Naive thymus-derived CD4-positive, alpha-beta T cell (primary cell): ENCODE measurements at regions of chr10 and their contacts with region 1.

Region 1: GRCh38 chr10:124741281-124741921 is 2.8 kb downstream of the FAM53B start:
- DNase-seq: peak in 8 of 9 donors; percentile 62 to 80 (median 76)
- ATAC-seq: peak; percentile 68
- H3K4me3 ChIP-seq: peak overlapping the region; percentile 61
- H3K4me3 Mint-ChIP-seq: peak overlapping the region; percentile 83 to 98 (median 96)
- H3K27ac ChIP-seq: peak overlapping the region; percentile 57
- H3K27ac Mint-ChIP-seq: peak overlapping the region; percentile 81 to 92 (median 87)
- H3K4me1 ChIP-seq: peaks cover 63 to 68% of the 10 kb centered on the region in 2 donors
- H3K4me1 Mint-ChIP-seq: peaks cover 40 to 78% (median 73%) of the 10 kb centered on the region in 7 donors
- H3K27me3 ChIP-seq: no peaks in the 10 kb centered on the region
- H3K27me3 Mint-ChIP-seq: peaks cover 0 to 27% (median 0%) of the 10 kb centered on the region in 5 donors

Region 2: GRCh38 chr10:124231168-124232155 is 509.9 kb before region 1 on chr10:
- CTCF ChIA-PET with region 1: no interaction called
- POLR2A ChIA-PET with region 1: no interaction called
- intact Hi-C with region 1: loop called in 1 of 2 experiments (anchors 5 kb)
- DNase-seq: peak; percentile 14 to 88 (median 70)
- ATAC-seq: peak; percentile 67
- H3K4me3 ChIP-seq: no peak overlapping the region
- H3K4me3 Mint-ChIP-seq: peak overlapping the region in 6 of 10 donors; percentile 19 to 73 (median 52)
- H3K27ac ChIP-seq: no peak overlapping the region
- H3K27ac Mint-ChIP-seq: peak overlapping the region; percentile 22 to 97 (median 83)
- H3K4me1 ChIP-seq: no peaks in the 10 kb centered on the region
- H3K4me1 Mint-ChIP-seq: peaks cover 0 to 13% (median 0%) of the 10 kb centered on the region in 7 donors
- H3K27me3 ChIP-seq: no peaks in the 10 kb centered on the region
- H3K27me3 Mint-ChIP-seq: peaks cover 0 to 19% (median 0%) of the 10 kb centered on the region in 5 donors

Region 3: DNA sequence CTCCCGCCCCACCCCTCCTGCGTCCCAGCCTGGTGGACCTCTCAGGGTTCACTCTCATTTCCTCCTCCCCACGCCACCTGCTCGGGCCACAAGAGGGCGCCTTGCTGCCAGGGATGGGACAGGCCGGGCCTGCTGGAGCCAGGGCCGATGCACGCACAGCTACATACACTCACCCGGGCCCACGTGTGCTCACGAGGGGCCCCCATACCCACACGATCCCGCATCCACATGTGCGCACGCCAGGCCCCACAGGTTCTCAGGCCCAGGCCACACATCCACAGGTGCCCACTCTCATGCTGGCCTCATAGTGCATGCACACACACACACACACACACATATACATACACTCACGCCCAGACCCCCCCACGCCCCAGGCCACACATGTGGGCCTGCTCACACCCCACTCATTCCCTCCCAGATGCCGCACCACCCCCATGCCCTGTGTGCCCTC is 211.2 kb before region 1 on chr10:
- CTCF ChIA-PET with region 1: interaction called, 110 read pairs
- POLR2A ChIA-PET with region 1: interaction called, 8 read pairs
- intact Hi-C with region 1: loop called (anchors 1 kb)
- DNase-seq: peak; percentile 68 to 87 (median 80)
- ATAC-seq: peak; percentile 95
- H3K4me3 ChIP-seq: no peak overlapping the region
- H3K4me3 Mint-ChIP-seq: peak overlapping the region in 3 of 10 donors; percentile 18 to 59 (median 21)
- H3K27ac ChIP-seq: no peak overlapping the region
- H3K27ac Mint-ChIP-seq: peak overlapping the region in 3 of 9 donors; percentile 14 to 53 (median 38)
- H3K4me1 ChIP-seq: no peaks in the 10 kb centered on the region
- H3K4me1 Mint-ChIP-seq: peaks cover 3 to 16% (median 5%) of the 10 kb centered on the region in 7 donors
- H3K27me3 ChIP-seq: no peaks in the 10 kb centered on the region
- H3K27me3 Mint-ChIP-seq: peaks cover 0 to 7% (median 0%) of the 10 kb centered on the region in 5 donors

Region 4: GRCh38 chr10:124626759-124627380 is 114.5 kb before region 1 on chr10:
- CTCF ChIA-PET with region 1: interaction called, 44 read pairs
- POLR2A ChIA-PET with region 1: interaction called, 21 read pairs
- intact Hi-C with region 1: loop called (anchors 1 kb)
- DNase-seq: peak in 6 of 9 donors; percentile 29 to 57 (median 40)
- ATAC-seq: peak; percentile 77
- H3K4me3 ChIP-seq: peak overlapping the region; percentile 1
- H3K4me3 Mint-ChIP-seq: peak overlapping the region in 9 of 10 donors; percentile 46 to 71 (median 63)
- H3K27ac ChIP-seq: peak overlapping the region; percentile 16
- H3K27ac Mint-ChIP-seq: peak overlapping the region; percentile 71 to 91 (median 83)
- H3K4me1 ChIP-seq: peaks cover 34 to 38% of the 10 kb centered on the region in 2 donors
- H3K4me1 Mint-ChIP-seq: peaks cover 25 to 58% (median 48%) of the 10 kb centered on the region in 7 donors
- H3K27me3 ChIP-seq: no peaks in the 10 kb centered on the region
- H3K27me3 Mint-ChIP-seq: no peaks in the 10 kb centered on the region

Region 5: DNA sequence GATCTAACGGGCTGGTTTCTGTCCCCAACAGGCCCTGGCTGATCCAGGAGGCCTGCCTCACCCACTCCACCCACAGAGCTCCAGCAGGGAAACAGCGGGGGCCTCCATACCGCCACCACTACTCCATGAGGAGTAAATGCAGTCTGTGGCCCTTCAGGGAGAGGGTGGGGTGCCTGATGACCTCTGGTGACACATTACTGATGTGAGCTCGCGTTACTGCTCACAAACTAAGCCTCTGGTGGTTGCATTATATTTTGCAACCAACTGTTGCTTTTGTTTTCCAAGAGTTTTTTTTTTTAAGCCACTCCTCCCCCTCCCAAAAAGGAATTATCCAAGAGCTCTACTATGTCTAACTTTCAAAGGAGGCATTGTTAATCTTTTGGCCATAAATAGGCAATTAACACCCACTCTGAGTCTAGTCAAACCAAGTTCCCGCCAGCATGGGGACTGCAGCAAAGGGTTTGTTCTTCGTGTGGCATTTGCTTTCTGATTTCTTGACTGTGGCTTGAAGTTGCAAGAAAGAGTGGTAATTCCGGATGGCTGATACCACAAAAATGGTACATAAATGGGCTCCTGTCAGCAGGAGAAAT is 69.8 kb before region 1 on chr10:
- CTCF ChIA-PET with region 1: interaction called, 8 read pairs
- POLR2A ChIA-PET with region 1: interaction called, 6 read pairs
- intact Hi-C with region 1: loop called in 1 of 2 experiments (anchors 2 kb)
- DNase-seq: peak in 5 of 9 donors; percentile 31 to 60 (median 48)
- ATAC-seq: peak; percentile 71
- H3K4me3 ChIP-seq: peak overlapping the region; percentile 34
- H3K4me3 Mint-ChIP-seq: peak overlapping the region in 9 of 10 donors; percentile 55 to 93 (median 73)
- H3K27ac ChIP-seq: peak overlapping the region; percentile 19
- H3K27ac Mint-ChIP-seq: peak overlapping the region; percentile 23 to 93 (median 89)
- H3K4me1 ChIP-seq: peaks cover 83 to 97% of the 10 kb centered on the region in 2 donors
- H3K4me1 Mint-ChIP-seq: peaks cover 40 to 92% (median 82%) of the 10 kb centered on the region in 7 donors
- H3K27me3 ChIP-seq: no peaks in the 10 kb centered on the region
- H3K27me3 Mint-ChIP-seq: no peaks in the 10 kb centered on the region

Region 6: GRCh38 chr10:124697830-124698544 is 43.4 kb before region 1 on chr10:
- CTCF ChIA-PET with region 1: interaction called, 16 read pairs
- POLR2A ChIA-PET with region 1: interaction called, 15 read pairs
- intact Hi-C with region 1: loop called (anchors 1 to 2 kb)
- DNase-seq: peak in 4 of 9 donors; percentile 12 to 50 (median 41)
- ATAC-seq: peak; percentile 68
- H3K4me3 ChIP-seq: no peak overlapping the region
- H3K4me3 Mint-ChIP-seq: peak overlapping the region in 9 of 10 donors; percentile 53 to 82 (median 73)
- H3K27ac ChIP-seq: peak overlapping the region; percentile 67
- H3K27ac Mint-ChIP-seq: peak overlapping the region; percentile 84 to 97 (median 91)
- H3K4me1 ChIP-seq: peaks cover 66 to 90% of the 10 kb centered on the region in 2 donors
- H3K4me1 Mint-ChIP-seq: peaks cover 73 to 96% (median 94%) of the 10 kb centered on the region in 7 donors
- H3K27me3 ChIP-seq: no peaks in the 10 kb centered on the region
- H3K27me3 Mint-ChIP-seq: no peaks in the 10 kb centered on the region

Region 7: GRCh38 chr10:124802313-124802675 is 60.9 kb after region 1 on chr10:
- CTCF ChIA-PET with region 1: no interaction called
- POLR2A ChIA-PET with region 1: no interaction called
- intact Hi-C with region 1: loop called (anchors 1 kb)
- DNase-seq: peak in 1 of 9 donors; percentile 16
- ATAC-seq: peak; percentile 28
- H3K4me3 ChIP-seq: peak overlapping the region; percentile 97
- H3K4me3 Mint-ChIP-seq: peak overlapping the region; percentile 85 to 96 (median 88)
- H3K27ac ChIP-seq: peak overlapping the region; percentile 90
- H3K27ac Mint-ChIP-seq: peak overlapping the region; percentile 55 to 95 (median 88)
- H3K4me1 ChIP-seq: peaks cover 0 to 5% of the 10 kb centered on the region in 2 donors
- H3K4me1 Mint-ChIP-seq: peaks cover 9 to 24% (median 17%) of the 10 kb centered on the region in 7 donors
- H3K27me3 ChIP-seq: no peaks in the 10 kb centered on the region
- H3K27me3 Mint-ChIP-seq: peaks cover 0 to 12% (median 4%) of the 10 kb centered on the region in 5 donors